Heart right ventricle (tissue), 16 donors: ENCODE measurements at regions of chr16 and their contacts with region 1.

Region 1: DNA sequence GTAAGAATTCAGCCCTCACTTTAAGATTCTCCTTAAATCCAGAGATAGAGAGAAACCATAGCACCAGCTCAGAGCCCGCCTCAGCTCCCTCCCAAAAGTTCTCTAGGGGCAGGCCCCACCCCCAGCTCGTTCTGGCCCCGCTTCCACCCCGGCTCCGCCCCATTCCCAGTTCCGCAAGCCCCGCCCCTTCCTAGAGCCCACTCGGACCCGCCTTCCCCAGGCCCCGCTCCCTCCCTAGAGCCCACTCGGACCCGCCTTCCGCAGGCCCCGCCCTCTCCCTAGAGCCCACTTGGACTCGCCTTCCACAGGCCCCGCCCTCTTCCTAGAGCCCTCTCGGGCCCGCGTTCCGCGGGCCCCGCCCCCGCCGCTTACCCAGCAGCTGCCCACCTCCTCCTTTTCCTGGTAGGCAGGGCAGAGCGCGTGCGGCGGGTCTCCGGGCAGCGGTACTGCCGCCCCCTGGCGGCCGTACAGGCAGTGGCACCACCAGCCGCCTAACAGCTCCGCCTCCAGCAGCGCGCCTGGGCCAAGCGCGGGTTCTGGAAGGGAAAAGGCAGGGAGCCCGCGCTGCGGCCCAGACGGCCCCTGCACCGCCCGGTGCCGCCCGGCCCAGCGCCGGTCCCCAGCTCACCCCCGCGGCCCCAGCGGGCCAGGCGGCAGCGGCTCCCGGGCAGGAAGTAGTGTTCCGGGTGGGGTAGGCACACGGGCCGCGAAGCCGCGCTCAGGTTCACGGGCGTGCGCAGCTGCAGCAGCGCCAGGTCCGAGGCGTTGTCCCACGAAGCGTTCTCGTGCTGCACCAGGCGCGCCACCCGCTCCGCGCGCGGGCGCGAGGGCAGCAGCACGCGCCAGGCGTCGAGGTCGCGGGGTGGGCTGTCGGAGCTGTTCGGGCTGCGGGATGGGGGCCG is 6.8 kb upstream of the PRSS8 start:
- DNase-seq: peak; percentile 99
- ATAC-seq: peak; percentile 96 to 99 (median 98)
- H3K4me3 ChIP-seq: peak overlapping the region in 9 of 10 donors; percentile 33 to 62 (median 51)
- H3K27ac ChIP-seq: peak overlapping the region in 9 of 10 donors; percentile 69 to 91 (median 82)
- H3K4me1 ChIP-seq: peaks cover 8 to 35% (median 26%) of the 10 kb centered on the region in 9 donors
- H3K27me3 ChIP-seq: peaks cover 0 to 7% (median 0%) of the 10 kb centered on the region in 7 donors
- CTCF ChIP-seq: peak; percentile 88 to 99 (median 96)

Region 2: GRCh38 chr16:31032736-31033708 is 109.3 kb before region 1 on chr16 and contains the start of gene STX4:
- intact Hi-C with region 1: loop called in 2 of 10 experiments (anchors 1 to 5 kb)
- DNase-seq: peak; percentile 98 to 99
- ATAC-seq: peak; percentile 92 to 98 (median 96)
- H3K4me3 ChIP-seq: peak within 1 kb of the TSS; percentile 74 to 96 (median 90)
- H3K27ac ChIP-seq: peak within 1 kb of the TSS; percentile 90 to 99 (median 96)
- H3K4me1 ChIP-seq: peaks cover 0 to 40% (median 20%) of the 10 kb centered on the region in 9 donors
- H3K27me3 ChIP-seq: no peaks in the 10 kb centered on the region
- CTCF ChIP-seq: peak in 1 of 9 donors; percentile 13
- total RNA-seq, gene STX4: 31.8 to 53.8 (median 38.6) TPM

Region 3: GRCh38 chr16:31094424-31095120 is 47.8 kb before region 1 on chr16 and contains the start of gene VKORC1:
- intact Hi-C with region 1: loop called in 1 of 10 experiments (anchors 1 kb)
- DNase-seq: peak; percentile 93 to 96
- ATAC-seq: peak; percentile 95 to 98 (median 96)
- H3K4me3 ChIP-seq: peak within 1 kb of the TSS; percentile 76 to 98 (median 88)
- H3K27ac ChIP-seq: peak within 1 kb of the TSS; percentile 51 to 93 (median 86)
- H3K4me1 ChIP-seq: peaks cover 0 to 30% (median 20%) of the 10 kb centered on the region in 9 donors
- H3K27me3 ChIP-seq: no peaks in the 10 kb centered on the region
- CTCF ChIP-seq: peak in 1 of 9 donors; percentile 12
- total RNA-seq, gene VKORC1: 27.0 to 68.1 (median 31.8) TPM

Region 4: DNA sequence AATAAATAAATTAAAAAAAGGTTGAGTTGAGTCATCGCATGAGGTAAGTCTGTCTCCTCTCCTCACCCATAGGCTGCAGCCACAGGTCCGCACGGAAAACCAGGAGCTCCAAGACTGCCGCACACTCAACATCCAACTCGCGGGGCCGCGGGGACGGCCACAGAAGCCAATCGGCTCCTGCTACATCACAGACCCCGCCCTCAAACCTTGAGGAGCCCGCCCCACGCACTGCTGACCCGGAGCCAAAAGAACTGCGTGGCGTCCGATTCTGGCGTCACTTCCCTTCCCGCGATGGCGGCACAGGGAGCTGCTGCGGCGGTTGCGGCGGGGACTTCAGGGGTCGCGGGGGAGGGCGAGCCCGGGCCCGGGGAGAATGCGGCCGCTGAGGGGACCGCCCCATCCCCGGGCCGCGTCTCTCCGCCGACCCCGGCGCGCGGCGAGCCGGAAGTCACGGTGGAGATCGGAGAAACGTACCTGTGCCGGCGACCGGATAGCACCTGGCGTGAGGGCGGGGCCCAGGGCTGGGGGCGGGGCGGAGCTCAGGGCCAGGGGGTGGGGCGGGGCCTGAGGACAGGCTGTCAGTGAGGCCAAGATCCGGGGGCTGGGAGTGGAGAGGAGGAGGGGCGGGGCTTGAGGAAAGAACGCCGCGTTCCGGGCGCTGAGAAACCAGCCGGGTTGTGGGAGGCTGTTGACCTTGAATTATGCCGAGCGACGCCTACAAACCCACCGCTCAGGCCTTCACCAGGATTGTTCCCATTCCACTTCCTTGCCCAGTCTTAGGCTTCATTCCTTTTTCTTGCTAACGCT is 24.8 kb before region 1 on chr16 and contains the start of gene KAT8:
- intact Hi-C with region 1: loop called in 3 of 10 experiments (anchors 1 to 2 kb)
- DNase-seq: peak; percentile 98 to 99
- ATAC-seq: peak; percentile 93 to 97 (median 94)
- H3K4me3 ChIP-seq: peak within 1 kb of the TSS; percentile 44 to 87 (median 74)
- H3K27ac ChIP-seq: peak within 1 kb of the TSS; percentile 91 to 98 (median 96)
- H3K4me1 ChIP-seq: peaks cover 10 to 62% (median 39%) of the 10 kb centered on the region in 9 donors
- H3K27me3 ChIP-seq: no peaks in the 10 kb centered on the region
- CTCF ChIP-seq: no peak
- total RNA-seq, gene KAT8: 51.9 to 79.9 (median 66.0) TPM